ENCODE measurements at regions of chr2 and their contacts with region 1.

Region 1: DNA sequence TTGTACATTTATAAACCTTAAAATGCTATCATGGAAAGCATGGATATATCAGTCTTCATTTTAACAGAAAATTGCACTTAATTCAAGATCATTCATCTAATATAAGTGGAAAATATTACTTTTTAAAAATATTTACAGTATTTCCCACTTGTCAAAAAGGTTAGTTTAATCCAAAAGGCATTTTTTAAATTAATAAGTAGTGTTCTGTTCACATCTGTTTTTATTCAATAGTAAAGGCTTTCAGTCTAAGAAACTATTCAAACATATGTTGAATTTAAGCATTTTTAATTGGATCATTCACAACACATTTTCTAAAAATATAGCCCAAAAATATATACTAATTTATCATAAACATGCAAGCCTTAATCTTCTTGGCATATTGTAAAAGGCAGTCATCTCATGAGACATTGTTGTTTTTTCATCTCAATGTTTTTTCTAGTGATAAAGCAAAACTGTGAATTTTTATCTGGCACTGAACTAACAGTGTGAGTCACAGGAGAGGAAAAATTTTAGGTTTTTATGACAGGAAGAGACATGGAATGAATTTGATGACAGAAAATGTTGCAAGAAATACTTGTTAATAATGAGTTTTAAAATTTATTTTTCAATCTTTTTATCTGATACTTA is 1642.5 kb upstream of the TMEFF2 start:
- DNase-seq: no peak
- ATAC-seq: no peak
- H3K4me3 Mint-ChIP-seq: no peak overlapping the region
- H3K27ac Mint-ChIP-seq: no peak overlapping the region
- H3K4me1 Mint-ChIP-seq: no peaks in the 10 kb centered on the region
- H3K27me3 Mint-ChIP-seq: no peaks in the 10 kb centered on the region

Region 2: DNA sequence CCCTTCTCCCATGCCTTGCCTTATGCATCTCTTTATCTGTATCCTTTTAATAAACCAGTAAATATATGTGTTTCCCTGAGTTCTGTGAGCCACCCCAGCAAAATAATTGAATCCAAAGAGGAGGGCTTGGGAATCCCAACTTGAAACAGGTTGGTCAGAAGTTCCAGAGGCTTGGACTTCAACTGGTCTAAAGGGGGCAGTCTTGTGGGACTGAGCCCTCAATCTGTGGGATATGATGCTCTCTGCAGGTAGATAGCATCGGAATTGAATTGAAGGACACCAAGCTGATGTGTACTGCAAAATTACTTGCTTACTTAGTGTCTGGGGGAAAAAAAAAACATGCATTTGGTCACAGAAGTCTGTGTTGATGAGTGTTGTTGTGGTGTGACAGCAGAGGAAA is 608.9 kb before region 1 on chr2:
- CTCF ChIA-PET with region 1: no interaction called
- POLR2A ChIA-PET with region 1: no interaction called
- intact Hi-C with region 1: no loop called
- DNase-seq: no peak
- ATAC-seq: no peak
- H3K4me3 Mint-ChIP-seq: no peak overlapping the region
- H3K27ac Mint-ChIP-seq: no peak overlapping the region
- H3K4me1 Mint-ChIP-seq: no peaks in the 10 kb centered on the region
- H3K27me3 Mint-ChIP-seq: no peaks in the 10 kb centered on the region

Region 3: DNA sequence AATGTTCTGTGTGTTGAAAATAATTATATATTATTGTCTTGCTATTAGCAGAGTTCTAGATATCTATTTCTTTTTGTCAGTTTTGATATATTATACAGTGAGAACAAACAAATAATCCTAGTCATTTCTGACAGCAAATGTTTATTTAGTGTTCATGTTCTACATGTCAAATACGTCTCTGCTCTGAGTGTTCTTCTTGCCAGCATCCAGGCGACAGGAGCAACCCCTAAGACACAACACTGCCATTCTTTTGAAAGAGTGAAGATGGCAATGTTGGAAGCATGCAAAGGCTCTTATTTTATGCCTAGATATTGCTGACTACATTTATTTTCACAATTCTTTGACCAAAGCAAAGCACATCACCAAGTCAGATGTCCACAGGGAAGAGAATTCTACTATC is 85.9 kb before region 1 on chr2:
- CTCF ChIA-PET with region 1: no interaction called
- POLR2A ChIA-PET with region 1: no interaction called
- intact Hi-C with region 1: no loop called
- DNase-seq: no peak
- ATAC-seq: no peak
- H3K4me3 Mint-ChIP-seq: no peak overlapping the region
- H3K27ac Mint-ChIP-seq: no peak overlapping the region
- H3K4me1 Mint-ChIP-seq: no peaks in the 10 kb centered on the region
- H3K27me3 Mint-ChIP-seq: no peaks in the 10 kb centered on the region

Region 4: GRCh38 chr2:193824474-193824873 is 12.8 kb before region 1 on chr2:
- CTCF ChIA-PET with region 1: interaction called, 4 read pairs
- POLR2A ChIA-PET with region 1: no interaction called
- intact Hi-C with region 1: loop called (anchors 1 kb)
- DNase-seq: no peak
- ATAC-seq: no peak
- H3K4me3 Mint-ChIP-seq: no peak overlapping the region
- H3K27ac Mint-ChIP-seq: no peak overlapping the region
- H3K4me1 Mint-ChIP-seq: no peaks in the 10 kb centered on the region
- H3K27me3 Mint-ChIP-seq: no peaks in the 10 kb centered on the region

Region 5: GRCh38 chr2:193847991-193848390 is 10.8 kb after region 1 on chr2:
- CTCF ChIA-PET with region 1: no interaction called
- POLR2A ChIA-PET with region 1: no interaction called
- intact Hi-C with region 1: no loop called
- DNase-seq: no peak
- ATAC-seq: no peak
- H3K4me3 Mint-ChIP-seq: no peak overlapping the region
- H3K27ac Mint-ChIP-seq: no peak overlapping the region
- H3K4me1 Mint-ChIP-seq: no peaks in the 10 kb centered on the region
- H3K27me3 Mint-ChIP-seq: no peaks in the 10 kb centered on the region